ENCODE measurements at regions of chr1 and their contacts with region 1.

Region 1: GRCh38 chr1:53639251-53639763 is 99.7 kb downstream of the GLIS1 start:
- DNase-seq: peak in 1 of 2 donors; percentile 30
- ATAC-seq: peak; percentile 93 to 95 (median 94)
- H3K4me3 ChIP-seq: no peak overlapping the region
- H3K27ac ChIP-seq: peak overlapping the region; percentile 49
- H3K4me1 ChIP-seq: no peaks in the 10 kb centered on the region
- H3K27me3 ChIP-seq: no peaks in the 10 kb centered on the region
- CTCF ChIP-seq: peak; percentile 37

Region 2: DNA sequence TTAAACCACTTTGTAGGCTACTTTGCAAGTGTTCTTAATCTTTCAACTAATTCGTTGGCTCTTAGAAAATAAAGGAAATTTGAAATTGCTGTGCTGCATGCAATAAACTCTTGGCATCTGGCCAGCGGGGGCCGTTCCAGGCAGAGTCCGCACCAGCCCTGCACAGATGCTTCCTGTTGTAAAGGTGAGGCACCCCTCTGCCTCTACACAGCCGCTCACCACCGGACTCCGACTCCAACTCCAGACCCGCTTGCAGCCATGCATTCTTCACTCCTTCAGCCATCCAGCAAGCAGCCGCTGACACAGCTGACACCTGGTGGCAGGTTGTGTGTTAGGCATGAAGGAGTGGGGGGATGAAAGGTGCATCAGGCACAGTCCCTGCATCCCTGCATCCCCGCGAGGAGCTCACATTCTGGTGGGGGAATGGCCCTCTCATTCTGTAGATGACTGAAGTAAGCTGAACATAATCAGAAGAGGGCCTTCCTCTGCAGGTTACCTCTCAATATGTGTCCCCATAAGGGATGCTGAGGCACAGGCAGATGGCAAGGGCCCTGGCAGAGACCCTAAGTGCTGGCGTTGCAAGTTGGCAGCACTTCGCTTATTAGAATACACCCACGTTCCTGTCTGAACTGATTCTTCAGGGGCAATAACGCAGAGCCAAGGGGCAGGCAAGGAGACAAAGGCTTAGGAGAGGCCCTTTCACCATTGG is 42.8 kb after region 1 on chr1:
- intact Hi-C with region 1: loop called in 1 of 2 experiments (anchors 5 kb)
- DNase-seq: peak; percentile 35 to 62
- ATAC-seq: peak; percentile 41 to 64 (median 50)
- H3K4me3 ChIP-seq: no peak overlapping the region
- H3K27ac ChIP-seq: no peak overlapping the region
- H3K4me1 ChIP-seq: no peaks in the 10 kb centered on the region
- H3K27me3 ChIP-seq: peaks cover 0 to 39% (median 9%) of the 10 kb centered on the region in 3 donors
- CTCF ChIP-seq: peak; percentile 48

Region 3: DNA sequence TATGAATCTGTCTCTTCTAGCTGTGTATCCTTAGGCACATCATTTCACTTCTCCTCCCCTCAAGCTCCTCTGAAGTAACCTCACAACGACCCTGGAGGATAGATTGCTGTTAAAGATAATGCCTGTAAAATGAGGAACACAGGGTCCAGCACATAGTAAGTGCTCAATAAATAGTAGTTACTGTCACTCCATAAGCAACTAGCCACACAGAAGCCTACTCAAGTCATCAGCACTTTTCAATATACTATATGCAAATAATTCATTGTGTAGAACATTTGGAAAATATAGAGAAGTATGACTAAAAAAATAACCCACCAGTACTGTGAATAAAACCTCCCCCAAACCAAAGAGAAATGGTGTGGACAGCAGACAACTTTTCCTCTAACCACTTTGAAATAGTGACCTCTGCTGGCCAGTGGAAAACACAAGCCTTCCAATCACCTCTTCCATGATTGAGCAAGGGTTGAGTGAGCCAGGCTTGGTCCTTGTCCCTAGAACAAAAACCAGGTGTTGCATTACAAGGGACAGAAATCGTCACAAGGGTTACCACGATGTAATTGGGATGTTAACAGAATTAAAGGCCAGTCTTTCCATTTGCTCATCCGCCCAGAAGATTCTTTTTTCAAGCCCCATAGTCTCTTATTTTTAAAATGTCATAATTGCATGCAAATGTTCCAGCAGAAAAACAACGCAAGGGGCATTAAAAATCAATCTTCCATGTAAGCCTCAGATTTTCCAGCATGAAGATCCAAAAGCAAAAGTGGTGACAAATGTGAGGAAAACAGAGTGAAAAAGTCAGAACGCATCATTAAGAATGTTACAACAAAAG is 115.4 kb after region 1 on chr1:
- intact Hi-C with region 1: loop called in 1 of 2 experiments (anchors 5 kb)
- DNase-seq: no peak
- ATAC-seq: peak; percentile 59 to 81 (median 74)
- H3K4me3 ChIP-seq: no peak overlapping the region
- H3K27ac ChIP-seq: no peak overlapping the region
- H3K4me1 ChIP-seq: no peaks in the 10 kb centered on the region
- H3K27me3 ChIP-seq: no peaks in the 10 kb centered on the region
- CTCF ChIP-seq: peak; percentile 62

Measured in psoas muscle (tissue), 8 donors.